ENCODE measurements at regions of chr15 and their contacts with region 1.

Region 1: GRCh38 chr15:62389885-62390790 is 225.1 kb upstream of the C2CD4B start:
- DNase-seq: no peak
- ATAC-seq: peak; percentile 88
- H3K4me3 ChIP-seq: peak within 1 kb of the TSS; percentile 84 to 100
- H3K27ac ChIP-seq: peak within 1 kb of the TSS; percentile 94
- H3K4me1 ChIP-seq: peaks cover 5% of the 10 kb centered on the region
- H3K27me3 ChIP-seq: peaks cover 17% of the 10 kb centered on the region
- CTCF ChIP-seq: no peak

Region 2: DNA sequence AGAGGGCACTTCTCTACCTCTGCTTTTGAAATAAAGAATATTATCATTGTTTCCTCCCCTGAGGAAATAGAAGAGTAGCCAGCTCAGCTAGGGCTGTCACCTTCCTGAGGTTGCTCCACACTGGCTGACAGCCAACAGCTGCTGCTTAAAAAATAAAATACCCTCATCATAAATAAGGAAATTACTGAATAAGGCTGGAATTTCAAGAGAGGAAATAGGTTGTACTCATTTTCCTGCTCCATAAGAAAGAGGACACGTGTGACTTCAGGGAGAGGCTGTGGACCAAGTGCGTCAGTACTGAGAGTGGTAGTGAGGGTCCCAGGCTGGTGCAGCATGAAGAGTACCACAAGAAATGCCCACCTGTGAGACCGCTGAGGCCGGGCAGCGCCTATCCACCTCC is 216.9 kb before region 1 on chr15:
- CTCF ChIA-PET with region 1: no interaction called
- POLR2A ChIA-PET with region 1: no interaction called
- in situ Hi-C with region 1: no loop called
- intact Hi-C with region 1: no loop called
- DNase-seq: no peak
- ATAC-seq: no peak
- H3K4me3 ChIP-seq: no peak overlapping the region
- H3K27ac ChIP-seq: no peak overlapping the region
- H3K4me1 ChIP-seq: no peaks in the 10 kb centered on the region
- H3K27me3 ChIP-seq: peaks cover 13% of the 10 kb centered on the region
- CTCF ChIP-seq: no peak

Region 3: GRCh38 chr15:62426387-62426956 is 36.3 kb after region 1 on chr15:
- CTCF ChIA-PET with region 1: no interaction called
- POLR2A ChIA-PET with region 1: no interaction called
- in situ Hi-C with region 1: no loop called
- intact Hi-C with region 1: no loop called
- DNase-seq: no peak
- ATAC-seq: no peak
- H3K4me3 ChIP-seq: no peak overlapping the region
- H3K27ac ChIP-seq: no peak overlapping the region
- H3K4me1 ChIP-seq: no peaks in the 10 kb centered on the region
- H3K27me3 ChIP-seq: no peaks in the 10 kb centered on the region
- CTCF ChIP-seq: no peak

Region 4: DNA sequence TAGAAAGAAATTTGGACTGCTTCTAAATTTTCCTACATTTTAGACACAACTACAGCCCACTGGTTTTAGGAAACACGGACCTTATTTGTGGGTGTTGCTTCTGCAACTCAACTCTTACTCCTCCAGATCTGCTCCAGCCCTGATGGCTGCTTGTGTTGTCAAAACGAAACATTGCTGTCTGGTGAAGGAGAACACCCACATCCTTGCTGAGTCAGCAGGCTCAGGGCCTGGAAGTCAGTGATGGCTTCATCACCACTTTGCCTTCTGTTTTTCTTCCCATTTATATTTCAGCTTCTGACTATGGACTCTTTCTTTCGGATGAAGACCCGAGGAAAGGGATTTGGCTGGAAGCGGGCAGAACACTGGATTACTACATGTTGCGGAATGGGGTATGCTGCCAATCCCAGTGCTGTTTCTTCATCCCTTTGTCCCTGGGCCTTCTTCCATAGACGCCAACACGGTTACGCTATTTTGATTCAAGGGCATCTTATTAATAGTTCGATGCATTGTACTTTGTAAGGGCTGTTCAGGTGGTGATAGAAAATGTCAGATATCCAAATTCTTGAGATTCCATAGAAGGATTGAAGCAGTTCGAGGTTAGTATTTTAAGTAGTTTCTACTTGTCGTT is 259.8 kb after region 1 on chr15:
- CTCF ChIA-PET with region 1: interaction called, 3 read pairs
- POLR2A ChIA-PET with region 1: interaction called, 13 read pairs
- in situ Hi-C with region 1: no loop called
- intact Hi-C with region 1: no loop called
- DNase-seq: no peak
- ATAC-seq: no peak
- H3K4me3 ChIP-seq: no peak overlapping the region
- H3K27ac ChIP-seq: no peak overlapping the region
- H3K4me1 ChIP-seq: no peaks in the 10 kb centered on the region
- H3K27me3 ChIP-seq: no peaks in the 10 kb centered on the region
- CTCF ChIP-seq: no peak

Measured in Panc1 (cell line).